ENCODE measurements at regions of chr3 and their contacts with region 1.

Region 1: GRCh38 chr3:142828703-142829305 is 60.1 kb downstream of the PCOLCE2 start:
- H3K4me3 ChIP-seq: no peak overlapping the region
- H3K27ac ChIP-seq: no peak overlapping the region
- H3K4me1 ChIP-seq: no peaks in the 10 kb centered on the region
- CTCF ChIP-seq: peak; percentile 66

Region 2: GRCh38 chr3:142356818-142357217 is 472.0 kb before region 1 on chr3:
- CTCF ChIA-PET with region 1: no interaction called
- POLR2A ChIA-PET with region 1: no interaction called
- H3K4me3 ChIP-seq: no peak overlapping the region
- H3K27ac ChIP-seq: no peak overlapping the region
- H3K4me1 ChIP-seq: no peaks in the 10 kb centered on the region
- CTCF ChIP-seq: no peak

Region 3: GRCh38 chr3:142586803-142587406 is 241.9 kb before region 1 on chr3:
- CTCF ChIA-PET with region 1: interaction called, 24 read pairs
- POLR2A ChIA-PET with region 1: no interaction called
- H3K4me3 ChIP-seq: no peak overlapping the region
- H3K27ac ChIP-seq: no peak overlapping the region
- H3K4me1 ChIP-seq: no peaks in the 10 kb centered on the region
- CTCF ChIP-seq: no peak; the same call in 1 of the 2 replicates

Region 4: DNA sequence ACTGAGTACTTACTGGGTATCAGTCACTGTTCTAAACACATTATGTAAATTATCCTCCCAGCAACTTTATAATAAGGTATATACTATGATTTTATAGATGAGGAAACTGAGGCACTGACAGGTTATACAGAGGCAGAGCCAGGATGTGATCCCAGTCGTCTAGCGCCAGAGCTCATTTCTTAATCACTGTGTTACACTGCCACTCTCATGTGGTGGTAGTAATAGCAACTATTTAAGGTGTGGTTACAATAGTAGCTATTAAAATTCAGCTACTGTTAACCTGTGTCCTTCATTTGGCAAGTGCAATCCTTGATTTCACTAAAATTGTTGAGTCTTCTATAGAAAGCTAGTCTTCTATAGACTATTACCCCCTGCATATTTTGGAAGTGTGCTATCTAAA is 148.1 kb before region 1 on chr3:
- CTCF ChIA-PET with region 1: no interaction called
- POLR2A ChIA-PET with region 1: no interaction called
- H3K4me3 ChIP-seq: no peak overlapping the region
- H3K27ac ChIP-seq: no peak overlapping the region
- H3K4me1 ChIP-seq: no peaks in the 10 kb centered on the region
- CTCF ChIP-seq: no peak

Region 5: GRCh38 chr3:142705198-142705597 is 123.6 kb before region 1 on chr3:
- CTCF ChIA-PET with region 1: no interaction called
- POLR2A ChIA-PET with region 1: no interaction called
- H3K4me3 ChIP-seq: no peak overlapping the region
- H3K27ac ChIP-seq: no peak overlapping the region
- H3K4me1 ChIP-seq: no peaks in the 10 kb centered on the region
- CTCF ChIP-seq: no peak

Region 6: GRCh38 chr3:142817897-142818296 is 10.9 kb before region 1 on chr3:
- CTCF ChIA-PET with region 1: interaction called, 18 read pairs
- POLR2A ChIA-PET with region 1: no interaction called
- H3K4me3 ChIP-seq: no peak overlapping the region
- H3K27ac ChIP-seq: no peak overlapping the region
- H3K4me1 ChIP-seq: no peaks in the 10 kb centered on the region
- CTCF ChIP-seq: no peak

Region 7: DNA sequence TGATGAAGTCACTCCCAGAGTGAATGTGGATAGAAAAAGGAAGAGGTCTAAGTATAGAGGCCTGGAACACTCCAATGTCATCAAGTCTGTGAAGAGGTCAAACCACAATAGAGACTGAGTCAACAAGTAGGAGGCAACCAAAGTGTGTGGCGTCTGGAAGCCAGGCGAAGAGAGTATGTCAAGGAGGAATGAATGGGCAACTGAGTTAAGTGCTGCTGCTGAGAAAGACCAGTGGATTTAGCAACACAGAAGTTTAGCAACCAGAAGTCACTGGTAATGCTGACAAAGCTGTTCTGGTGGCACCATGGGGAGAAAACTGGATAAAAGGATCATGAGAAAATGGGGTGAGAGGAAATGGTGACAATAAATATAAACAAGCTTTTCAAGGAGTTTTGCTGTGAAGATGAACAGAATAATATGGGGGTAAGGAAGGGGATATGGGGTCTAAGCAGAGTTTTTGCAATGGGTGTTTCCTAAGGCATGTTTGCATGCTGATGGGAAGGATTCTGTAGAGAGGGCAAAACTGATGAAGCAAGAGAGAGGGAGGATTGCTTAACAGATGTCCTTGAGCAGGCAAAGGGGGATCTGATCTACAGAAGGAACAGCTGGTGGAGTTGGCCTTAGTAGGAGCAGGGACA is 21.7 kb after region 1 on chr3:
- CTCF ChIA-PET with region 1: interaction called, 11 read pairs
- POLR2A ChIA-PET with region 1: no interaction called
- H3K4me3 ChIP-seq: no peak overlapping the region
- H3K27ac ChIP-seq: no peak overlapping the region
- H3K4me1 ChIP-seq: no peaks in the 10 kb centered on the region
- CTCF ChIP-seq: no peak

Region 8: GRCh38 chr3:142981108-142981507 is 152.3 kb after region 1 on chr3:
- CTCF ChIA-PET with region 1: interaction called, 33 read pairs
- POLR2A ChIA-PET with region 1: no interaction called
- H3K4me3 ChIP-seq: no peak overlapping the region
- H3K27ac ChIP-seq: no peak overlapping the region
- H3K4me1 ChIP-seq: no peaks in the 10 kb centered on the region
- CTCF ChIP-seq: no peak

Region 9: GRCh38 chr3:142993958-142994442 is 165.2 kb after region 1 on chr3:
- CTCF ChIA-PET with region 1: interaction called, 81 read pairs
- POLR2A ChIA-PET with region 1: interaction called, 3 read pairs
- H3K4me3 ChIP-seq: no peak overlapping the region
- H3K27ac ChIP-seq: no peak overlapping the region
- H3K4me1 ChIP-seq: no peaks in the 10 kb centered on the region
- CTCF ChIP-seq: no peak

Region 10: GRCh38 chr3:143241481-143241951 is 412.7 kb after region 1 on chr3:
- CTCF ChIA-PET with region 1: no interaction called
- POLR2A ChIA-PET with region 1: no interaction called
- H3K4me3 ChIP-seq: no peak overlapping the region
- H3K27ac ChIP-seq: no peak overlapping the region
- H3K4me1 ChIP-seq: no peaks in the 10 kb centered on the region
- CTCF ChIP-seq: no peak

Measured in HEK293 (cell line).